Posterior vena cava (tissue), 2 donors: ENCODE measurements at regions of chr1 and their contacts with region 1.

Region 1: DNA sequence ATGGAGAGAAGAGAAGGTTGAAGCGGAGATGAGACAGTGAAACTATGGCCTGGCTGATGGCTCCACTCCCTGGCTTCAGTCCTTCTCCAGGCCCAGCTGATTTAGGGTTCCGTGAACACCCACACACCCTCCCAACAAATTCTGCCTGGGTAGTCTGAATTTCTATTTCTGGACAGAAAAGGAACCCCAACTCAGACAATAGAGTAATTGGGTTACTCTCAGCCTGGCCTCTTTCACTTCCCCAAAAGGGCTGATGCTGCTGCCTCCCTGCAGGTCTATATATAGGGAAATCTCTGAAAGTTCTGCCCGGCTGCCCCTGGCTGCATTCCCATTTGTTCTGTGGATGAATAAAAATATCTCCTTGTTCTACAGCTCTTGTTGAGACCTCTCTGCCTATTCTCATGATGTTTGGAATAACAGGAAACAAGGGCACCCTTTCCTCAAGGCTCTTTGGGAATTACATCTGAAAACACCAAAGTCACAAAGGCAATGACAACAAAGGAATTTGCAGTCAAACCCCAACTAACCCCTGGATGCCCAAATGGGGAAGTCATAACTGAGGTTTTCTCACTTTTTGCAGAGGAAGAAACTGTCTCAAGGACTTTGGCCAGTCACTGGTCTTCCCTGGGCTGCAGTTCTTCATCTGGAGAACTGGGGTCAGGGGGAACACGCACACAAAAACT is 11.4 kb upstream of the ZSCAN20 start:
- DNase-seq: no peak

Region 2: GRCh38 chr1:33237206-33237978 is 223.7 kb before region 1 on chr1:
- intact Hi-C with region 1: loop called in 1 of 2 experiments (anchors 10 kb)
- DNase-seq: peak; percentile 26

Region 3: DNA sequence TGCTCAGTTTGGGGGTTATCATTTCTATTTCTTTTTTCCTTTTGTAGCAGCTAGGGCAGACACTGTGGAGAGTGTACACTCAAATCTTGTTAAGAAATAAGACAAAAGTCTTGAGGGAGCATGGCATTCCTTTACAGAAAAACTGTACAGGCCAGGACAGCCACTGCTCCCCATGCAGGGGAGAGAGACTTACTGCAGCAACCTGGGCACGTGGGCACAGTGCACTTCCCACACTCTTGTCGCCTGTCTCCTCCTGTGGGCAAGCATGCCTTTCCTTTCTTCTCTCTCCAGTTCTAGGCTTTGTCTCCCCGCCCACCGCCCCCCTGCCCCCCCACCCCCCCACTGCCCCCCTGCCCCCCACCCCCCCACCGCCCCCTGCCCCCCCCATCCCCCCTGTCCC is 82.1 kb before region 1 on chr1:
- intact Hi-C with region 1: loop called in 1 of 2 experiments (anchors 10 kb)
- DNase-seq: no peak